ENCODE measurements at regions of chr5 and their contacts with region 1.

Region 1: DNA sequence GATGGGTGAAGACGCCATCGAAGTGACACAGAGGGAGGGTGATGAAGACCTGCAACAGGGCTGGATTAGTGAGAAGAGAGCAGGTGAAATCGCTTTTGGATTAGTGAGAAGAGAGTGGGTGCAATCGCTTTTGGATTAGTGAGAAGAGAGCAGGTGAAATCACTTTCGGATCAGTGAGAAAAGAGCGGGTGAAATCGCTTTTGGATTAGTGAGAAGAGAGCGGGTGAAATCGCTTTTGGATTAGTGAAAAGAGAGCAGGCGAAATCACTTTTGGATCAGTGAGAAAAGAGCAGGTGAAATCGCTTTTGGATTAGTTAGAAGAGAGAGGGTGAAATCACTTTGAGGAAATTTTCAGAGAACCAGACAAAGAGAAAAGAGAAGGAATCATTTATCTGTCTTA is 67.2 kb upstream of the TRIO start:
- DNase-seq: no peak
- CTCF ChIP-seq: no peak

Region 2: GRCh38 chr5:14064841-14065240 is 11.1 kb before region 1 on chr5:
- CTCF ChIA-PET with region 1: interaction called, 10 read pairs
- POLR2A ChIA-PET with region 1: no interaction called
- DNase-seq: no peak
- CTCF ChIP-seq: no peak

Region 3: GRCh38 chr5:14190194-14191164 is 114.5 kb after region 1 on chr5:
- CTCF ChIA-PET with region 1: no interaction called
- POLR2A ChIA-PET with region 1: no interaction called
- DNase-seq: no peak
- CTCF ChIP-seq: no peak